WTC11 (cell line): ENCODE measurements at regions of chr13 and their contacts with region 1.

Region 1: GRCh38 chr13:36282818-36283445 is 14.7 kb downstream of the CCDC169 start:
- DNase-seq: no peak
- ATAC-seq: peak; percentile 62; the same call in 1 of the 2 replicates
- H3K4me3 Mint-ChIP-seq: no peak overlapping the region
- H3K27ac Mint-ChIP-seq: peak overlapping the region; percentile 5; the same call in 1 of the 2 replicates
- H3K4me1 Mint-ChIP-seq: peaks cover 19% of the 10 kb centered on the region
- H3K27me3 Mint-ChIP-seq: no peaks in the 10 kb centered on the region
- CTCF ChIP-seq: peak; percentile 81

Region 2: GRCh38 chr13:36395280-36395679 is 112.3 kb after region 1 on chr13:
- CTCF ChIA-PET with region 1: interaction called, 24 read pairs
- POLR2A ChIA-PET with region 1: no interaction called
- DNase-seq: no peak
- ATAC-seq: peak; percentile 69
- H3K4me3 Mint-ChIP-seq: no peak overlapping the region
- H3K27ac Mint-ChIP-seq: no peak overlapping the region
- H3K4me1 Mint-ChIP-seq: no peaks in the 10 kb centered on the region
- H3K27me3 Mint-ChIP-seq: no peaks in the 10 kb centered on the region
- CTCF ChIP-seq: no peak

Region 3: DNA sequence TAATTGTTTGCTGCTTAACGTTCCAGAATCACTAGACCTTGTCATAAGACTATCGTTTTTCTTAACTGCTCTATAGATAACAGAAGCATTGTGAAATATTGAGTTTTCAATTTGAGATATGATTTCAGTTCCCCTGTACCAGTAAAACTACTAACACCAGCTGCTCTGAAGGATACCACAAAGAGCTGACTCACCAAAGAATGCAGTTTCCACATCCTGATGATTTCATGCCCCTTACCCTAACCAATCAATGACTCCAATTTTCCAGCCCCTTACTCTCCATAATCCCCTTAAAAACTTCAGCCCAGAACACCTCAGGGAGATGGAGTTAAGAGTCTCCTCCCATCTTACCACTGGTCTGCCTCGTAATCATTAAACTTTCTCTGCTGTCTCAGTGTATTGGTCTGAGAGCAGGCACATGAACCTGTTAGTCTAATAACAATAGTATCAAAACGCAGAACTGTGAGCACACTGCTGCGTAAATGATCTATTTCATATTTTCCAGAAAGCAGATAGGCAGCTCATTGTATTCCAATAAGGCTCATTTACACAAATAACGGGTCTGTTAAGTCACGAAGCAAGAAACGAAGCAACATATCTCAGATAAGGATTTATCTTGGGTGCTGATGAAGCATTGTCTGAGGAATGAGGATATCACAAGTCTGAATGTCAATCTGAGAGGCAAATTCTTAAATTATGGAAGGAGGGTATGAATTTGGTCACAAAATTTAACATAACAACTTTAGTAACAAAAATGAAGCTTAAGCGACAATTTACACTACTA is 135.3 kb after region 1 on chr13:
- CTCF ChIA-PET with region 1: interaction called, 18 read pairs
- POLR2A ChIA-PET with region 1: no interaction called
- DNase-seq: no peak
- ATAC-seq: peak; percentile 43; the same call in 1 of the 2 replicates
- H3K4me3 Mint-ChIP-seq: no peak overlapping the region
- H3K27ac Mint-ChIP-seq: no peak overlapping the region; the same call in 1 of the 2 replicates
- H3K4me1 Mint-ChIP-seq: peaks cover 9% of the 10 kb centered on the region
- H3K27me3 Mint-ChIP-seq: no peaks in the 10 kb centered on the region
- CTCF ChIP-seq: no peak

Region 4: DNA sequence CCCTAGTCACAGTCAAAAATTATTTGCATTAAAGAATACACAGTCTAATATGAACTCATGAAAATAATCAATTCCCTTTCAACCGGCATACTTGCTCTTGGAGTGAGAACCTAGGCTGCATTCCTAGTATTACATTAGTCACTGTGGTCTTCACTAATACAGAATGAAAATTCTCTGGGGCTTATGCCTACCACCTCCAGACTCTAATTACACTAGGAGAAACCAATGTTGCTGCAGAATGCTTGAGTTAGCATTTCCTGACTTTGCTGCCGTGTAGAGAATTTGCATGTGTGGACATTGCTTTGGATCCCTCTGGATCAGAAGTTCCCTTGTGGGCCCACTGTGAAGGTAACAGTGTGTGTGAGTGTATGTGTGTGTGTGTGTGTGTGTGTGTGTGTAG is 237.2 kb after region 1 on chr13:
- CTCF ChIA-PET with region 1: no interaction called
- POLR2A ChIA-PET with region 1: no interaction called
- DNase-seq: no peak
- ATAC-seq: no peak; the same call in 1 of the 2 replicates
- H3K4me3 Mint-ChIP-seq: peak overlapping the region; percentile 39; the same call in 1 of the 2 replicates
- H3K27ac Mint-ChIP-seq: peak overlapping the region; percentile 93; the same call in 1 of the 2 replicates
- H3K4me1 Mint-ChIP-seq: peaks cover 46% of the 10 kb centered on the region
- H3K27me3 Mint-ChIP-seq: no peaks in the 10 kb centered on the region
- CTCF ChIP-seq: no peak